ENCODE measurements at regions of chr16 and their contacts with region 1.

Region 1: DNA sequence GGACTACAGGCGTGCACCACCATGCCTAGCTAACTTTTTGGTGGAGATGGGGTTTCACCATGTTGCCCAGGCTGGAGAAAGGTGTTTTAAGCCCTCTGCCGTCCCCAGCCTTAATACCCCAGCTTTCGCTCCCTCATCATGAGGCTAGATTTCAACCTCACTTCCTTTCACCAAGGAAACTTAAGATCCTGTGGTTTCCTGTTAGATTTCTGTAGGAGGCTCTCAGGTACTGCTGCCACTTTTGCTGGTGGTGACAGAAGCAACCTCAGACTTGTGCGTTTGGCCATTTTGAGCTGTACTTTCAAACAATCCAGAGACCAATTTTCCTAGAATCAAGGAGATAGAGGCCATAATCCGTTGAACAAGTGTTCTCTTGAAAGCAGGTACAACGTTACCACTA is 36.2 kb downstream of the MPHOSPH6 start:
- DNase-seq: no peak
- H3K4me3 ChIP-seq: no peak overlapping the region
- H3K27ac ChIP-seq: no peak overlapping the region
- H3K4me1 ChIP-seq: no peaks in the 10 kb centered on the region
- H3K27me3 ChIP-seq: no peaks in the 10 kb centered on the region
- CTCF ChIP-seq: no peak
- EP300 ChIP-seq: no peak
- POLR2A ChIP-seq: no peak

Region 2: GRCh38 chr16:81158964-81159363 is 974.8 kb before region 1 on chr16:
- in situ Hi-C with region 1: no loop called
- intact Hi-C with region 1: loop called (anchors 5 kb)
- DNase-seq: no peak
- H3K4me3 ChIP-seq: no peak overlapping the region
- H3K27ac ChIP-seq: no peak overlapping the region
- H3K4me1 ChIP-seq: no peaks in the 10 kb centered on the region
- H3K27me3 ChIP-seq: no peaks in the 10 kb centered on the region
- CTCF ChIP-seq: no peak
- EP300 ChIP-seq: no peak
- POLR2A ChIP-seq: no peak

Region 3: DNA sequence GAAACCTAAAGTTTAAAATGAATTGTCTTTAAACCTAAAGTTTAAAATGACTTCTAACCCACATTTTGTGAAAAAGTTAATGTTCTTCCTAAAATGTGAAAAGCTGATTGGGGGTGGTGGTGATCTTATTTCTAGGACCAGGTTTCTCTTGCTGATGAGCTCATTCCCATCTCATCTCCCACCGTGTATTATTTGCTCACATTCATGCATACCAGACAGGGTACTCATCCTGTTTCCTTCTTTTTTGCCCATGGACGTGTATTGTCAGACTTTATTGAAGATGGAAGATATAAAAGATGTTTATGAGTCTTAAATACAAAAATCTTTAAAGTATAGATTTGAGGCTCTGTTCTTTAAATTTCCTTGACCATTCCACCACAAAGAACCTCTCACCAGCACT is 106.3 kb after region 1 on chr16:
- in situ Hi-C with region 1: no loop called
- intact Hi-C with region 1: no loop called
- DNase-seq: no peak
- H3K4me3 ChIP-seq: no peak overlapping the region
- H3K27ac ChIP-seq: no peak overlapping the region
- H3K4me1 ChIP-seq: no peaks in the 10 kb centered on the region
- H3K27me3 ChIP-seq: peaks cover 4% of the 10 kb centered on the region
- CTCF ChIP-seq: no peak
- EP300 ChIP-seq: no peak
- POLR2A ChIP-seq: no peak